ENCODE measurements at regions of chr9 and their contacts with region 1.

Region 1: GRCh38 chr9:34413231-34413852 is 36.6 kb upstream of the MYORG start:
- DNase-seq: no peak
- ATAC-seq: peak; percentile 50; the same call in 1 of the 2 replicates
- H3K4me3 ChIP-seq: no peak overlapping the region
- H3K27ac ChIP-seq: no peak overlapping the region
- H3K4me1 ChIP-seq: no peaks in the 10 kb centered on the region
- H3K27me3 ChIP-seq: no peaks in the 10 kb centered on the region
- CTCF ChIP-seq: no peak
- POLR2A ChIP-seq: no peak
- RAD21 ChIP-seq: no peak

Region 2: GRCh38 chr9:34430843-34431437 is 17.6 kb after region 1 on chr9:
- CTCF ChIA-PET with region 1: no interaction called
- POLR2A ChIA-PET with region 1: no interaction called
- RAD21 ChIA-PET with region 1: no interaction called
- intact Hi-C with region 1: loop called (anchors 2 kb)
- DNase-seq: peak; percentile 13
- ATAC-seq: peak; percentile 70
- H3K4me3 ChIP-seq: no peak overlapping the region
- H3K27ac ChIP-seq: no peak overlapping the region
- H3K4me1 ChIP-seq: no peaks in the 10 kb centered on the region
- H3K27me3 ChIP-seq: no peaks in the 10 kb centered on the region
- CTCF ChIP-seq: no peak
- POLR2A ChIP-seq: no peak
- RAD21 ChIP-seq: no peak

Region 3: GRCh38 chr9:34493972-34494535 is 80.7 kb after region 1 on chr9:
- CTCF ChIA-PET with region 1: no interaction called
- POLR2A ChIA-PET with region 1: no interaction called
- RAD21 ChIA-PET with region 1: no interaction called
- intact Hi-C with region 1: loop called (anchors 2 kb)
- DNase-seq: no peak
- ATAC-seq: peak; percentile 46; the same call in 1 of the 2 replicates
- H3K4me3 ChIP-seq: no peak overlapping the region
- H3K27ac ChIP-seq: no peak overlapping the region
- H3K4me1 ChIP-seq: 0 out of 4 replicates have a peak, but pooled peaks cover 0 to 6% of the 10 kb centered on the region in 2 experiments
- H3K27me3 ChIP-seq: no peaks in the 10 kb centered on the region
- CTCF ChIP-seq: no peak
- POLR2A ChIP-seq: no peak
- RAD21 ChIP-seq: no peak

Region 4: DNA sequence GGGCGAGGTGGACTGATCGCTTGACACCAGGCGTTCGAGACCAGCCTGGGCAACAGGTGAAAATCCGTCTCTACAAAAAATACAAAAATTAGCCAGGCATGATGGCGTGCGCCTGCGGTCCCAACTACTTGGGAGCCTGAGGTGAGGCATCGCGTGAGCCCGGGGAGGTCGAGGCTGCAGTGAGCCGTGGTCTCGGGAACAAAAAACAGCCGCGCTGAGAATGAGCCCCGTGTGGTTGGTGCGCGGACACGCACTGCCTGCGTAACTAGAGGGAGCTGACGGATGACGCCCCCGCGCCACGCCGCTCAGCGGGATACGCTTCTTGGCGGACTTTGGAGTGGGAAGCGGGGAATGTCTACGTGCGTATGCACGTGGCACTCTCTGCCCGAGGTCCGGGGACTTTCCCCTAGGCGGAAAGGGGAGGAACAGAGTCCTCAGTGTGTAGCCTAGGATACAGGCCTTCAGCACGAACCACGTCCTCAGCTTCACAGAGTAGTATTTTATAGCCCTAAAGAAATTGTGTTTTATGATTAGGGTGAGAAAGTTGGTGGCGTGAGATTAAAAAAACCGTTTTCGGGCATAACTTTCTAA is 1244.3 kb after region 1 on chr9 and contains the start of gene RMRP:
- CTCF ChIA-PET with region 1: no interaction called
- POLR2A ChIA-PET with region 1: no interaction called
- RAD21 ChIA-PET with region 1: no interaction called
- intact Hi-C with region 1: no loop called
- DNase-seq: peak; percentile 99
- ATAC-seq: peak; percentile 89
- H3K4me3 ChIP-seq: peak within 1 kb of the TSS; percentile 68 to 75
- H3K27ac ChIP-seq: peak within 1 kb of the TSS; percentile 85
- H3K4me1 ChIP-seq: peaks cover 10 to 34% of the 10 kb centered on the region in 2 experiments; a peak in 3 of 4 replicates
- H3K27me3 ChIP-seq: no peaks in the 10 kb centered on the region
- CTCF ChIP-seq: no peak
- POLR2A ChIP-seq: no peak
- RAD21 ChIP-seq: no peak
- total RNA-seq, gene RMRP: 30,969 TPM

Measured in HCT116 (cell line).